ENCODE measurements at regions of chr12 and their contacts with region 1.

Region 1: DNA sequence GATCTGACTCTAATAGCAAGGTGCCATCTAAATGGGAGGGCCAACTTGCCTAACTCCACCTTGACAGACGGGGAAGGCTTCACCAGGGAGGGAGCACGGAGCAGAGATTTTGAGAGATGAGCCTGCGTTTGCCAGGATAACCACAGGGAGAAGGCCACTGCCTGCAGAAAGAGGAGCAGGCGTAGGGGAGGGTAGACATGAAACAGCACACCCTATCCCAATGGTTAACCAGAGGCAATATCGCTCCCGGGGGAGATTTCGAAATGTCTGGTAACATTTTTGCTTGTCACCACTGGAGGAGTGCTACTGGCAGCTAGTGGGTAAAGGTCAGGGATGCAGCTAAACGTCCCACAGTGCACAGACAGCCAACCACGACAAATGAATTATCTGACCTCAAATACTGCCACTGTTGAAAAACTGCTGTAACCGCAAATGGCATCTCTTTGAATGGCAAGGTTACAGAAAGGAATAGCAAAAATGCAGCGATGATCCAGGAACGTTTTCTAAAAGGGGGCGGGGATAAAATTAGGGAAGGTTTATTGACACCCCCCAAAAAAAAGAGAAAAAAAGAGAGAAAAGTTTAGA is 126.0 kb upstream of the ATF7IP start:
- DNase-seq: peak in 5 of 9 experiments; percentile 22 to 64 (median 53)
- ATAC-seq: peak; percentile 57
- H3K4me3 ChIP-seq: peak overlapping the region; percentile 33
- H3K4me3 Mint-ChIP-seq: peak overlapping the region; percentile 74
- H3K27ac ChIP-seq: peak overlapping the region in 1 of 2 experiments; percentile 21
- H3K27ac Mint-ChIP-seq: peak overlapping the region; percentile 72
- H3K4me1 ChIP-seq: peaks cover 22% of the 10 kb centered on the region
- H3K4me1 Mint-ChIP-seq: peaks cover 18% of the 10 kb centered on the region
- H3K27me3 ChIP-seq: no peaks in the 10 kb centered on the region
- H3K27me3 Mint-ChIP-seq: no peaks in the 10 kb centered on the region
- CTCF ChIP-seq: no peak

Region 2: GRCh38 chr12:13905809-13906208 is 333.6 kb before region 1 on chr12:
- CTCF ChIA-PET with region 1: no interaction called
- POLR2A ChIA-PET with region 1: no interaction called
- intact Hi-C with region 1: no loop called
- DNase-seq: no peak
- ATAC-seq: no peak
- H3K4me3 ChIP-seq: no peak overlapping the region
- H3K4me3 Mint-ChIP-seq: no peak overlapping the region
- H3K27ac ChIP-seq: no peak overlapping the region
- H3K27ac Mint-ChIP-seq: no peak overlapping the region
- H3K4me1 ChIP-seq: no peaks in the 10 kb centered on the region
- H3K4me1 Mint-ChIP-seq: no peaks in the 10 kb centered on the region
- H3K27me3 ChIP-seq: no peaks in the 10 kb centered on the region
- H3K27me3 Mint-ChIP-seq: peaks cover 5% of the 10 kb centered on the region
- CTCF ChIP-seq: no peak

Region 3: GRCh38 chr12:14225064-14225463 is 14.4 kb before region 1 on chr12:
- CTCF ChIA-PET with region 1: interaction called, 11 read pairs
- POLR2A ChIA-PET with region 1: interaction called, 3 read pairs
- intact Hi-C with region 1: no loop called
- DNase-seq: no peak
- ATAC-seq: no peak
- H3K4me3 ChIP-seq: no peak overlapping the region
- H3K4me3 Mint-ChIP-seq: no peak overlapping the region
- H3K27ac ChIP-seq: no peak overlapping the region
- H3K27ac Mint-ChIP-seq: no peak overlapping the region
- H3K4me1 ChIP-seq: no peaks in the 10 kb centered on the region
- H3K4me1 Mint-ChIP-seq: peaks cover 6% of the 10 kb centered on the region
- H3K27me3 ChIP-seq: no peaks in the 10 kb centered on the region
- H3K27me3 Mint-ChIP-seq: no peaks in the 10 kb centered on the region
- CTCF ChIP-seq: no peak

Region 4: DNA sequence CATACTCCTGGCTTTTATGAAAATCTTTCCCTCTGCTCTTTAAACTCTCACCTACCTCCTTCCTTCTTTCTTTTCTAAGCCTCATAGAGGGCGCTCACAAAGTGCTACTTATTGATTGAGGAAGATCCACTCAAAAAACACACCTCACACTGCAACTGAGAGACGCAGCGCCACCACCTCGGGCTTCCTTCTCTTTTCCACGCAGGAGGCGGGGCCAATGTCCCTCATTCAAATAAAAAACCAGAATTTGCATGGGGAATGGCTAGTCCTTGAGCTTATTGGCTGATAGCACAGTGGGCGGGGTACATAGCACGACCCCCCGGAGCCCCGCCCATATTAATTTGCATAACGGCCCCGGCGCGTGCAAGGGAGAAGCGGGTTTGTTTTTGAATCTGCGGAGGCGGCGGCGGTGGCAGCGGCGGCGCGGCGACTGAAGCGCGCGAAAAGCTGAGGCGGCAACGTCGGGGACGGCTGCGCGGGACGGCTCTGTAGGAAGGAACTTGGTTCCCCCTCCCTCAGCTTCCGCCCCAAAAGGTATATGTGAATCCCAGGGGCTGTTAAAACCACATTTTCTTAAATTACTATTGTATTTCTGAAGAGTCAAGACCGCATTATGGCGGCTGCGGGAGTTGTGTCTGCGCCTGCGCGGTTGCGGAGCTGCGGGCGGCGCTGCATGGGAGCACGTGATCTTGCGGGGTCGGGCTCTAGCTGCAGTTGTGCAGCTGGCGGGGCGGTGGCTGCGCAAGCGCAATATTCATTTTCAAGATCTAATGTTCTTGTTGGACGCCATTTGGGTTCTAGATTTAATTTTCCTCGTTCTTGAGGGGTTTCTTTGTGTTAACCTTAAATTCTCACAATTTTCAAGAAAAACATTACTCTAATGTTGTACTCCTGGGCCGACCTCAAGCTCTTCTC is 126.1 kb after region 1 on chr12 and contains the start of gene ATF7IP:
- CTCF ChIA-PET with region 1: interaction called, 34 read pairs
- POLR2A ChIA-PET with region 1: interaction called, 7 read pairs
- intact Hi-C with region 1: loop called (anchors 1 to 5 kb)
- DNase-seq: peak; percentile 92 to 99 (median 95)
- ATAC-seq: peak; percentile 89
- H3K4me3 ChIP-seq: peak within 1 kb of the TSS; percentile 63 to 80
- H3K4me3 Mint-ChIP-seq: peak within 1 kb of the TSS; percentile 87
- H3K27ac ChIP-seq: peak within 1 kb of the TSS; percentile 88
- H3K27ac Mint-ChIP-seq: peak within 1 kb of the TSS; percentile 93
- H3K4me1 ChIP-seq: peaks cover 24% of the 10 kb centered on the region
- H3K4me1 Mint-ChIP-seq: peaks cover 46% of the 10 kb centered on the region
- H3K27me3 ChIP-seq: no peaks in the 10 kb centered on the region
- H3K27me3 Mint-ChIP-seq: no peaks in the 10 kb centered on the region
- CTCF ChIP-seq: no peak
- total RNA-seq, gene ATF7IP: 125 to 126 TPM

Region 5: DNA sequence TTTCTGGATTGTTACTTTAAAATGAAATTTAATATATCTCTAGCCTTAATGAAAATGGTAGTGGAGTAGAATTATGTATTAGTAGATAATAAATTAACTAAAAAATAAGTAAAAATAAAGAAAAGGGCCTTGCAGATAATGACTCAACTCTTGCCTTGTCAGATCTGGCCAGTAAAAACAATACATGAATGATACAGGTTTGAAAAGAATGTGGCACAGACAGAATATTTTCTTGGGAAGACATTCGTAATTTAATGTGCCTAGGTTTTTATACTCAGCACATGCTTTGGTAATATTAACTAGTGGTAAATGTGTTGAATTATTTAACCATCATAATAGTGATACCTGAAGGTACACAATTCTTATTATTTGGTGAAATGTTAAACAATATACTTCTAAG is 154.3 kb after region 1 on chr12:
- CTCF ChIA-PET with region 1: no interaction called
- POLR2A ChIA-PET with region 1: no interaction called
- intact Hi-C with region 1: no loop called
- DNase-seq: no peak
- ATAC-seq: no peak
- H3K4me3 ChIP-seq: no peak overlapping the region
- H3K4me3 Mint-ChIP-seq: no peak overlapping the region
- H3K27ac ChIP-seq: peak overlapping the region in 1 of 2 experiments; percentile 75
- H3K27ac Mint-ChIP-seq: peak overlapping the region; percentile 64
- H3K4me1 ChIP-seq: peaks cover 92% of the 10 kb centered on the region
- H3K4me1 Mint-ChIP-seq: peaks cover 85% of the 10 kb centered on the region
- H3K27me3 ChIP-seq: no peaks in the 10 kb centered on the region
- H3K27me3 Mint-ChIP-seq: no peaks in the 10 kb centered on the region
- CTCF ChIP-seq: no peak

Region 6: DNA sequence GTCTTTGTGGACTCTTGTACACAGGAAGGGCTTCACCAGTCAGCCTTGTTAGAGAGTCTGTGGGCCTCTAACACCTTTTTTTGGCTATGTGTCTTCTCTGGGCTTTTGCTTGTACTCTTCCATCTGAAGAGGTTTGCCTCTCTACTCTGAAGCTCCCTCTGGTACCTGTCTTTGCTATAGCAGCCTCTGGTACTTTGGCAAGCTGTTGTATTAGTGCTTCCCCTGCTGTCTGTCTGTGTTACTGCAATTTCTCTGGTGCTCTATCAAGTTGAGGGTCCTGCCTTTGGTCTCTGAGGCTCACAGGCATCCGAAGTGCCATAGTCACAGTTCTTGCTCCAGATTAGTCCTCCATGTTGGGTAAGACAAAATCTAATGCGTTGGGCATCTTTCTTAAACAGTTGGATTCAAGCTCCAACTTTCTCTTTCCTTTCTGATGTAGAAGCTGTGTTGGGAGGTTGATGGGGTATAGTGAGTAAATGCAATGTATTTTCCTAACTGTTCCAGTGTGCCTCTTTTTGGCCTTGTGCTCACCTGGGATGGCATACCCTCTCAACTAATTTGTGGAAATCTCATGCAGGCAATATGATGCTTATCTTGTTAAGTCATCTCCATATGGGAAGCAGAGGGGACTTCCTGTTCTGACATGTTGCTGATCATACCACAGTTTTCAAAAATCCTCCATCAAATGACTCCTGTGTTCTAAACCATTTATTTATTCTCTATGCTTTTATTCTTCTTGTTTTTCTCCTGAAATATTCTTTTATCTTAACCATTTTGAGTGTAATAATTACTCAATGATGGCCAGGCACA is 214.9 kb after region 1 on chr12:
- CTCF ChIA-PET with region 1: interaction called, 20 read pairs
- POLR2A ChIA-PET with region 1: no interaction called
- intact Hi-C with region 1: loop called (anchors 1 kb)
- DNase-seq: peak in 3 of 9 experiments; percentile 13 to 70 (median 59)
- ATAC-seq: peak; percentile 91
- H3K4me3 ChIP-seq: no peak overlapping the region
- H3K4me3 Mint-ChIP-seq: no peak overlapping the region
- H3K27ac ChIP-seq: peak overlapping the region in 1 of 2 experiments; percentile 21
- H3K27ac Mint-ChIP-seq: peak overlapping the region; percentile 76
- H3K4me1 ChIP-seq: peaks cover 8% of the 10 kb centered on the region
- H3K4me1 Mint-ChIP-seq: peaks cover 53% of the 10 kb centered on the region
- H3K27me3 ChIP-seq: no peaks in the 10 kb centered on the region
- H3K27me3 Mint-ChIP-seq: no peaks in the 10 kb centered on the region
- CTCF ChIP-seq: peak; percentile 44

Region 7: GRCh38 chr12:14629832-14630710 is 390.6 kb after region 1 on chr12:
- CTCF ChIA-PET with region 1: interaction called, 28 read pairs
- POLR2A ChIA-PET with region 1: no interaction called
- intact Hi-C with region 1: loop called (anchors 1 to 5 kb)
- DNase-seq: peak; percentile 32 to 77 (median 66)
- ATAC-seq: peak; percentile 100
- H3K4me3 ChIP-seq: no peak overlapping the region
- H3K4me3 Mint-ChIP-seq: no peak overlapping the region
- H3K27ac ChIP-seq: no peak overlapping the region
- H3K27ac Mint-ChIP-seq: no peak overlapping the region
- H3K4me1 ChIP-seq: no peaks in the 10 kb centered on the region
- H3K4me1 Mint-ChIP-seq: peaks cover 2% of the 10 kb centered on the region
- H3K27me3 ChIP-seq: no peaks in the 10 kb centered on the region
- H3K27me3 Mint-ChIP-seq: peaks cover 2% of the 10 kb centered on the region
- CTCF ChIP-seq: peak; percentile 99

Region 8: DNA sequence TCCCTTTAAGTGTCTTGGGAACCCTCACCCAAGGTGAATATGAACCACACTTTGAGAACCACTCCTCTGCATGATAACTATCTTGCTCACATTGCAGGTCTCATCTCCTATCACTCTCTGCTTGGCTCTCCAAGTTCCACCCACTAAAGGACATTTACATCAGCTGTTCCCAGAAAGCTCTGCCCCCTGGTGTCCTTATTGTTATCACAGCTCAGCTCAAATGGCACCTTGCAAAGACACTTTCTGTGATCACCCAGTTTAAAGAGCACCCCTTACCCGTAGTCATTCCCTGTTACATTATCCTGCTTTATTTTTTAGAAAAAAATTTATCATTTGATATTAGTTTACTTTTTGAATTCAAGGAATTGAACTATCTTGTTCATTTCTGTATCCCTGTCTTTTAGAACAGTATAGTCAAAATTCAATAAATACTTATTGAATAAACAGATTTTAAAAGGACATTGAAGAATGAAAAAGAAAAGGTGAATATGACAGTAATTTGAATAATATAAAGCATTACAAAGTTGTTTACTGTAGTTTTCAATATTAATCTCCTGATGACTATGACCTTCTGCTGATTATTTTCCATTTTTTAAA is 477.5 kb after region 1 on chr12:
- CTCF ChIA-PET with region 1: interaction called, 20 read pairs
- POLR2A ChIA-PET with region 1: no interaction called
- intact Hi-C with region 1: loop called (anchors 1 kb)
- DNase-seq: peak; percentile 10 to 73 (median 48)
- ATAC-seq: peak; percentile 71
- H3K4me3 ChIP-seq: no peak overlapping the region
- H3K4me3 Mint-ChIP-seq: no peak overlapping the region
- H3K27ac ChIP-seq: no peak overlapping the region
- H3K27ac Mint-ChIP-seq: no peak overlapping the region
- H3K4me1 ChIP-seq: no peaks in the 10 kb centered on the region
- H3K4me1 Mint-ChIP-seq: peaks cover 6% of the 10 kb centered on the region
- H3K27me3 ChIP-seq: no peaks in the 10 kb centered on the region
- H3K27me3 Mint-ChIP-seq: peaks cover 3% of the 10 kb centered on the region
- CTCF ChIP-seq: peak; percentile 64

Region 9: DNA sequence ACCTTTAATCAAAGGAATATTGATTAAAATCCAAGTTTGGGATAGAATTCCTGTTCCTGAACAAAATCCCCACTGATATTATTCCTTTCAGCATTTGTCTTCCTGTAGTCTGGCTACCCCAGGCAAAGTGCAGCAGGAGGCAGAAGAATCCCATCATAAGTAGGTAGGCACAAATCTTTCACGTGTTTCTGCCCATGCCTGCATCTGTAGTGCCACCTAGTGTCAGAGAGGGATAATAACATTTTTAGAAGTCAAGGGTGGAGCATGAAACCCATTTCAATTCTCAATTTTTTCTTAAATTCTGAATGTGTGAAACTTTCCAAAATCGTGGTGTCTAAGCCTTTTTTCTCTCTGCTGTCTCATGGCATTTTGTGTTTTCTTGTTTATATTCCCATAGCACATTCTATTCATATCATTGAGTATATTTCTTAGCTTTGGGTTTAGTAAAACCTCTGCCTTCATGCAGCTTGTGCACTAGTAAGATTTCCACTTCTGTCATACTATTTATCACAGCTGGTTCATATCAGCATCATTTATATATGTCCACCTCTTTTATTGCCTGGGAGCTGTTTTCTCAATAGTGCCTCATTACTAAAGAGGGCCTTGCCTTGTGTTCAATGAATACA is 1029.6 kb after region 1 on chr12:
- CTCF ChIA-PET with region 1: no interaction called
- POLR2A ChIA-PET with region 1: no interaction called
- intact Hi-C with region 1: loop called in 1 of 2 experiments (anchors 2 kb)
- DNase-seq: peak in 5 of 9 experiments; percentile 18 to 71 (median 27)
- ATAC-seq: peak; percentile 72
- H3K4me3 ChIP-seq: no peak overlapping the region
- H3K4me3 Mint-ChIP-seq: no peak overlapping the region
- H3K27ac ChIP-seq: no peak overlapping the region
- H3K27ac Mint-ChIP-seq: no peak overlapping the region
- H3K4me1 ChIP-seq: no peaks in the 10 kb centered on the region
- H3K4me1 Mint-ChIP-seq: no peaks in the 10 kb centered on the region
- H3K27me3 ChIP-seq: no peaks in the 10 kb centered on the region
- H3K27me3 Mint-ChIP-seq: peaks cover 5% of the 10 kb centered on the region
- CTCF ChIP-seq: peak; percentile 89

Measured in CD8-positive, alpha-beta T cell (primary cell).